Calu3 (cell line): ENCODE measurements at regions of chrX and their contacts with region 1.

Region 1: GRCh38 chrX:44872817-44873414 is at the start of gene KDM6A:
- DNase-seq: peak; percentile 98
- H3K4me3 Mint-ChIP-seq: peak within 1 kb of the TSS; percentile 73
- H3K27ac Mint-ChIP-seq: peak within 1 kb of the TSS; percentile 86
- H3K4me1 Mint-ChIP-seq: no peaks in the 10 kb centered on the region
- H3K27me3 Mint-ChIP-seq: no peaks in the 10 kb centered on the region
- CTCF ChIP-seq: no peak
- total RNA-seq, gene KDM6A: 40.4 and 42.8 TPM in 2 replicates

Region 2: GRCh38 chrX:44265559-44265958 is 607.4 kb before region 1 on chrX:
- CTCF ChIA-PET with region 1: no interaction called
- intact Hi-C with region 1: no loop called
- DNase-seq: no peak
- H3K4me3 Mint-ChIP-seq: no peak overlapping the region
- H3K27ac Mint-ChIP-seq: no peak overlapping the region
- H3K4me1 Mint-ChIP-seq: no peaks in the 10 kb centered on the region
- H3K27me3 Mint-ChIP-seq: no peaks in the 10 kb centered on the region
- CTCF ChIP-seq: no peak

Region 3: GRCh38 chrX:44914532-44915198 is 41.7 kb after region 1 on chrX:
- CTCF ChIA-PET with region 1: interaction called, 7 read pairs
- intact Hi-C with region 1: loop called (anchors 2 kb)
- DNase-seq: no peak
- H3K4me3 Mint-ChIP-seq: peak overlapping the region; percentile 57
- H3K27ac Mint-ChIP-seq: peak overlapping the region; percentile 73
- H3K4me1 Mint-ChIP-seq: peaks cover 35% of the 10 kb centered on the region
- H3K27me3 Mint-ChIP-seq: no peaks in the 10 kb centered on the region
- CTCF ChIP-seq: no peak

Region 4: GRCh38 chrX:44971674-44972073 is 98.8 kb after region 1 on chrX:
- CTCF ChIA-PET with region 1: no interaction called
- intact Hi-C with region 1: no loop called
- DNase-seq: no peak
- H3K4me3 Mint-ChIP-seq: peak overlapping the region; percentile 37
- H3K27ac Mint-ChIP-seq: peak overlapping the region; percentile 66
- H3K4me1 Mint-ChIP-seq: peaks cover 54% of the 10 kb centered on the region
- H3K27me3 Mint-ChIP-seq: no peaks in the 10 kb centered on the region
- CTCF ChIP-seq: no peak

Region 5: DNA sequence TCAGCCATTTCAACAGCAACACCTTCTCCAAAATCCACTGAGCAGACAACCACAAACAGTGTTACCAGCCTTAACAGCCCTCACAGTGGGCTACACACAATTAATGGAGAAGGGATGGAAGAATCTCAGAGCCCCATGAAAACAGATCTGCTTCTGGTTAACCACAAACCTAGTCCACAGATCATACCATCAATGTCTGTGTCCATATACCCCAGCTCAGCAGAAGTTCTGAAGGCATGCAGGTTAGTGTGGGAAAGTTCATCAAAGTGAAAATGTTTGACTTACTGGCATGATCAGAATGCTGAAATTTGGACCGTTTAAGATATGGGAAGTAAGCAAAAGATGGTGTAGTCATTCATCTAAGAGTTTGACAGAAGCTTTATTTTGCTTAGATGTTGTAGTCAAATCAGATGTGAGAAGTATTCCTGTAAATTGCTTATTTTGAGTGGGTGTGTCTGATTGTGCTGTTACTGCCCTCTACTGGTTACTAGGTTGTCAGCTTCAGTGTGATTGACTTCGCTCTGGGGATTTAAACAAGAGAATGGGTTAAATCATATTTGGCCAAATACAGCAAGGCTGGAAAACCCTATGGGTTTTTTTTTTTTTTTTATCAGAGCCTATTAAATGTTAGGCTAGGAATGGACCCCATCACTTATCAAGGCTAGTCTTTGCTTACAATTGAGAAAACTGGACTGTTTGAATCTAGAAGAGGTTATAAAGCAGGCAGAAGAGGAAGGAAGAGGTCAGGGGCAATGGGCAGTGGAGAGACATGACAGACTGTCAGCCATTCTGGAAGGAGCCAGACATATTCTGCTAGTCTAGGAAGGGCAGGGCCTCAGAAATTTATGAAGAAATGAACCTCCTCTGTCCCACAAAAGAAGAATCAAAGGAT is 197.4 kb after region 1 on chrX:
- CTCF ChIA-PET with region 1: interaction called, 3 read pairs
- intact Hi-C with region 1: loop called (anchors 5 kb)
- DNase-seq: peak; percentile 12
- H3K4me3 Mint-ChIP-seq: no peak overlapping the region
- H3K27ac Mint-ChIP-seq: no peak overlapping the region
- H3K4me1 Mint-ChIP-seq: peaks cover 13% of the 10 kb centered on the region
- H3K27me3 Mint-ChIP-seq: no peaks in the 10 kb centered on the region
- CTCF ChIP-seq: peak; percentile 41

Region 6: DNA sequence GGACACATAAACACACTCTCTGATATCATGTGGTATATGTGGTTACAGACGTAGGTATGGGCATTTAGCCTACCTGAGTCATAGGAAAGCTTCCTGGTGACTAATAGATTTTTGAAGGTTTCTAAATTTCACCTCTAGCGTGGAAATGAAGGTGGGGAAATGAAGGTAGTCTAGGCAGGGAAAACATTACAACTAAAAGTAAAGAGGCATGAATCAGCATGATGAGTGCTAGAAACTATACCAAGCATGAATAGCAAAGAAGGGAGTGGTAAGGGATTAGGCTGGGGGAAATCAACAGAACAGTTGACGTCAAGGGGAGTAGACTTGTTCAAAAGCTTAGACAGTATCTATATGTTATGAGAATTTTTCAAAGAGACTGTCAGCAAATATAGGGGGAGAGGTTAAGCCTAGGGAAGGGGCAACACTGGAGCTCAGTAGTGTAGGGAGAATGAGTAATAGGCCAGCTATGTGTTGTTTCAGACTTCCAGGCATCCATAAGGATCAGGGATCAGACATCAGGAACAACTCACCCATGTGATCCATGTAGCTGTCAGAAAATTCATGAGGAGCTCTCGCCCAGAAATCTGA is 607.0 kb after region 1 on chrX:
- CTCF ChIA-PET with region 1: no interaction called
- intact Hi-C with region 1: no loop called
- DNase-seq: peak; percentile 28
- H3K4me3 Mint-ChIP-seq: peak overlapping the region; percentile 29
- H3K27ac Mint-ChIP-seq: peak overlapping the region; percentile 99
- H3K4me1 Mint-ChIP-seq: peaks cover 11% of the 10 kb centered on the region
- H3K27me3 Mint-ChIP-seq: no peaks in the 10 kb centered on the region
- CTCF ChIP-seq: no peak